ENCODE measurements at regions of chr4 and their contacts with region 1.

Region 1: DNA sequence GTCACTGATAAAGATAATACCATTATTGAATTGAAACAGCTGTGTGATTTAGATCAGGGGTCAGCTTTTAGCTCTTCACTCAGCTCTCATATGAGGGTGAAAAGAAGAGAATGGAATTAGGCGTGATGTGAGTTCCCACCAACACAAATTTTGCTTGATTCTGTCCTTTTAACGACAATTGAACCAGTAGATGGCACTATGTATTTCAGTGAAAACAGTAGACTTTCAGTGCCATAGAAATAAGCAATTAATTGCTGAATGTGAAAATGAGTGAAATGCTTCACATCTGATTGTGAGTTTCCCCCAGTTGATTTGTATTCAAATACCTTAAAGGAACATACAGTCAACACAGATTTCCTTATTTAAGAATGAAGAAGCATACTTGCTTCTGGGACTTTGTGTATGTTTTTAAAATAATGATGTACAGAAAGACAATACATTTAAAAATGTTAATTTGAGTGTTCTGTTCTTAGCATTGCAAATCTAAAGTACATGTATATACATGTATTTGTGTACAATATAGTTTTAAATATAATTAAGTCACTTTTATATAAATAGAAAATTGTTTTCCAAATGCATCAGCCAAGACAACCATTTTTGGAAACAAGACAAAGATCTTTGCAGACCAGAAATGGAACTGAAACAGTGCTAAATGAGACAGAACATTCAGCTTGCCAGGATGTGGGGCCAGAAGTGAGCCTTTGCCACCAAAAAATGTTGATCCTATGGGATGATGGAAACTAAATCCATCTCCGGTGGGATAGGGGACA is 178.8 kb downstream of the SNCA start:
- DNase-seq: no peak

Region 2: DNA sequence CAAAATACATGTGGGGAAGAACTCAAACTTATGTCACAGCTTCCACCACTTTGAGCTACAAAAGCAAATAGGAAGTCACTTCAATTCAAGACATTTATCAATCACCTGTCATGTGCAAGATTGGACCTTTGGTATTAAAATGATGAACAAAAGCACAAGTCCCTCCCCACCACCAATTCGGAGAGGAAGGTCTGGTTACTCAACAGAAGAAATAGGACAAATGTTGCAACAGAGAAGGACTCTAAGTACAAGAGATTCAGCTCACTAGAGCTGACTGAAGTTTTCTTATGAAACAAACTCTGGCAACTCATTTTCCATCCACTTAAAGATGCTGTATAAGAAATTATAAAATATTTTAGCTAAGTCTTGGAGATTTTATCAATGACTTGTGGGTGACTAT is 220.5 kb after region 1 on chr4:
- intact Hi-C with region 1: loop called (anchors 10 kb)
- DNase-seq: no peak

Region 3: GRCh38 chr4:90349636-90350035 is 691.5 kb after region 1 on chr4:
- intact Hi-C with region 1: no loop called
- DNase-seq: no peak

Measured in cardiac septum (tissue), 1 donor.